Left cardiac atrium (tissue), 4 donors: ENCODE measurements at regions of chr4 and their contacts with region 1.

Region 1: DNA sequence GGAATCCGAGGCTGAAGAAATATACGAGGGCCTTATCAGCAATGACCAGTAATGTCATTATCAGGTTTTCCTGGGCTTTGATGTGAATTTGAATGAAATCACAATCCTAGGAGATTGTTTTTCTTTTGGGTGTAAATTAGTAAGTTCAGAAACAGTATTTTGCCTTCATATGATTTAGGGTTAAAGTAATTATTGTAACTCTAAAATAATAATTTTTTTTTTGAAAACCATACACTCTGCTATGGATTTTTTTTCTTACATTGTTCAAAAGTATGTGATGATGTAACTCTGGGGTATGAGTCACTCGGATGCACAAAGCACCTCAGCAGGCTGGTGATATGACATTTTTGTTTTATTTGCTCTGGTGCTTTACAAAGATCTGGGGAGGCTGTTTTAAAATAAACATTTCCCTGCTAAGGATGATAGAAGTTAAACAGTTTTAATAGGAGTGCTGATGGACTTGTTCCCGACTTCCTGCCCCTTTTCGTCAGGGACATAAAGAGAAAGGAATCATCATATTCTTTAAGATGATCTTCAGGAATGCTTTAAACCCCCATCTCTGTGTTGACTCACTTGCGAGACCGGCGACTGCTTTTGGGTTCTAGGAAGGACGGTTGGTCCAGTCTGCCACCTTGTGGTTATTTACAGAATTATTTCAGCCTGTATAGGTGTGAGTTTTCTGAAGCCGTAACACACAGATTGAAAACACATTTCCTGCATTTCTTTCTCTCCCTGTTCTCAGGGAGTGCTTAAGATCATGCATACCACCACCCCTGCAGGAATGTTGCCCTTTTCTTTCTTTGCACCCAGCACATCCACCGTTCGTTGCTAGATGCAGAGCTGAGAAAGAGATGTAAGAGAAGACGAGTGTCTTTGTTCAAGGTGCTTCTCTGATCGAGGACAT is 72.5 kb downstream of the RAPGEF2 start:
- DNase-seq: peak; percentile 58
- ATAC-seq: peak; percentile 85 to 91

Region 2: GRCh38 chr4:158722917-158723793 is 452.2 kb before region 1 on chr4 and contains the start of gene PPID:
- intact Hi-C with region 1: loop called in 1 of 2 experiments (anchors 10 kb)
- DNase-seq: peak; percentile 89
- ATAC-seq: peak; percentile 97 to 99
- total RNA-seq, gene PPID: 22.6 to 30.7 TPM

Region 3: GRCh38 chr4:158856852-158857251 is 318.5 kb before region 1 on chr4:
- intact Hi-C with region 1: loop called in 1 of 2 experiments (anchors 2 kb)
- DNase-seq: no peak
- ATAC-seq: peak; percentile 69 to 70

Region 4: GRCh38 chr4:158895797-158896576 is 279.4 kb before region 1 on chr4:
- intact Hi-C with region 1: loop called in 1 of 2 experiments (anchors 5 kb)
- DNase-seq: no peak
- ATAC-seq: peak in 1 of 2 donors; percentile 19

Region 5: GRCh38 chr4:159006202-159006601 is 169.1 kb before region 1 on chr4:
- intact Hi-C with region 1: loop called in 1 of 2 experiments (anchors 10 kb)
- DNase-seq: no peak
- ATAC-seq: no peak

Region 6: GRCh38 chr4:159206427-159206871 is 31.1 kb after region 1 on chr4:
- intact Hi-C with region 1: no loop called
- DNase-seq: no peak
- ATAC-seq: no peak

Region 7: GRCh38 chr4:159252491-159252890 is 77.2 kb after region 1 on chr4:
- intact Hi-C with region 1: no loop called
- DNase-seq: no peak
- ATAC-seq: peak; percentile 59 to 68